Heart right ventricle (tissue), 16 donors: ENCODE measurements at regions of chr12 and their contacts with region 1.

Region 1: DNA sequence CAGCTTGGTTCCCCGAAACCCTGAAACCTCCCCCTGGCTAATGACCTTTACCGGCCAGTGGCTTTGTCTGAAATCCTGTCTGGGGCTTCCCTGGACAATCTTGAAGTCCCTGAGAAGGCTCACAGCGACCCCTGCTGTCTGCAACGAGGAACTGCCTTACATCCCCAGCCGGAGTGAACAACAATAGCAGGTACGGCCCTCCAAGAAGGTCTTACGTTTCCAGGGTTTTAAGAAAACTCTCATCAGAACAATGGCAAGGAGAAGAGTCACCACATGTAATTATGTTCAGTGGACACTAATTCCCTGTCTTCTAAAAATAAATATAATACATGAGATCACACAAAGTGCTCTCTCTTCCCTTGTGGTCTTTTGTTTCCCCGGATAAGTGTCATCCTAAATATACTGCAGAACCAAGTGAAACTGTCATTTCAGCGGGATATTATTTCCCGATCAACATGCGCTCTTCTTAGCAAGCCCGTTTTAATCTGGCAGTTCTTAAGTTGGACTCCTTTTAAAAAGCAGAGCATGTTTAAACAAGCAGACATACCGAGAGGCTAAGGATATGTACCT is 53.3 kb downstream of the RBM19 start:
- DNase-seq: peak; percentile 47 to 51
- ATAC-seq: peak in 6 of 8 donors; percentile 38 to 85 (median 74)
- H3K4me3 ChIP-seq: no peak overlapping the region
- H3K27ac ChIP-seq: no peak overlapping the region
- H3K4me1 ChIP-seq: no peaks in the 10 kb centered on the region
- H3K27me3 ChIP-seq: no peaks in the 10 kb centered on the region
- CTCF ChIP-seq: peak; percentile 59 to 91 (median 87)

Region 2: GRCh38 chr12:113439606-113440030 is 473.2 kb before region 1 on chr12:
- intact Hi-C with region 1: loop called in 3 of 10 experiments (anchors 2 to 5 kb)
- DNase-seq: peak in 1 of 2 donors; percentile 25
- ATAC-seq: peak in 7 of 8 donors; percentile 17 to 52 (median 48)
- H3K4me3 ChIP-seq: no peak overlapping the region
- H3K27ac ChIP-seq: no peak overlapping the region
- H3K4me1 ChIP-seq: no peaks in the 10 kb centered on the region
- H3K27me3 ChIP-seq: peaks cover 0 to 54% (median 40%) of the 10 kb centered on the region in 7 donors
- CTCF ChIP-seq: peak in 8 of 9 donors; percentile 31 to 73 (median 56)

Region 3: DNA sequence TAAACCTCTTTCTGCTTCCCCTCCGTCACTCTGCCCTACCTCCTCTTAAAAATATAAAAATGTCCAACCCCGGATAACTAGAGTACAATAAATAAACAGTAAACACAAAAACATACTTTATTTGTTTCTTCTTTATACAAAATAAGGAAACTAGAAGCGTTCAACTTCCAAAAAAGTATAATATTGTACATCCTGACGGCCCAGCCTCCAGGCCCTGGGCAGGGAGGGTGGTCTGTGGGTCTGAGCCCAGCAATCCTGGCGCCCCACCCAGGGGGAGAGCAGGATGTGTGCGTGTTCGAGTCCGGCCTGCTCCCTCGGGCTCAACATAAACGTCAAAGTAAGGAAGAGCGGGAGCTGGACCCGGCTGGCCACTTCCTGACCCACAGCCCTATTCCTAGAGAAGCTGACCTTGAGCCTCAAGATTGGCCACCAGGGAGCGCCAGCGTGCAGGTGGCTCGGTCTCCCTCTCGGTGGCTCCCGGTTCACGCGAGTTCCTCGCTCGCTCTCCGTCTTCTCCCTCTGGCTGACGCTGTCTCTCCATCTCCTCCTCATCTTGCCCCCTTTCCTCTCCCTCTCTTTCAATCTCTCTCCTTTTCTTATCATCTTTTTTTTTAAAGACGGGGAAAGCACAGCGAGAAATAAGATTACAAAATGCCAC is 450.6 kb before region 1 on chr12:
- intact Hi-C with region 1: loop called (anchors 1 to 5 kb)
- DNase-seq: peak; percentile 76 to 83
- ATAC-seq: peak; percentile 71 to 85 (median 82)
- H3K4me3 ChIP-seq: peak overlapping the region in 8 of 10 donors; percentile 13 to 36 (median 26)
- H3K27ac ChIP-seq: no peak overlapping the region
- H3K4me1 ChIP-seq: peaks cover 16 to 42% (median 36%) of the 10 kb centered on the region in 9 donors
- H3K27me3 ChIP-seq: peaks cover 36 to 99% (median 95%) of the 10 kb centered on the region in 7 donors
- CTCF ChIP-seq: peak; percentile 65 to 91 (median 86)

Region 4: GRCh38 chr12:113479590-113480335 is 433.1 kb before region 1 on chr12:
- intact Hi-C with region 1: no loop called
- DNase-seq: peak; percentile 46 to 55
- ATAC-seq: peak in 3 of 8 donors; percentile 47 to 58 (median 58)
- H3K4me3 ChIP-seq: no peak overlapping the region
- H3K27ac ChIP-seq: no peak overlapping the region
- H3K4me1 ChIP-seq: peaks cover 0 to 6% (median 0%) of the 10 kb centered on the region in 9 donors
- H3K27me3 ChIP-seq: peaks cover 23 to 98% (median 96%) of the 10 kb centered on the region in 7 donors
- CTCF ChIP-seq: no peak